Mammary epithelial cell (primary cell): ENCODE measurements at regions of chr11 and their contacts with region 1.

Region 1: GRCh38 chr11:2420502-2421225 is 20.1 kb downstream of the TSSC4 start:
- DNase-seq: peak; percentile 40
- H3K4me3 ChIP-seq: peak overlapping the region in 1 of 3 experiments; percentile 3
- H3K27ac ChIP-seq: no peak overlapping the region
- H3K4me1 ChIP-seq: peaks cover 3% of the 10 kb centered on the region
- H3K27me3 ChIP-seq: no peaks in the 10 kb centered on the region
- CTCF ChIP-seq: peak; percentile 78 to 93

Region 2: DNA sequence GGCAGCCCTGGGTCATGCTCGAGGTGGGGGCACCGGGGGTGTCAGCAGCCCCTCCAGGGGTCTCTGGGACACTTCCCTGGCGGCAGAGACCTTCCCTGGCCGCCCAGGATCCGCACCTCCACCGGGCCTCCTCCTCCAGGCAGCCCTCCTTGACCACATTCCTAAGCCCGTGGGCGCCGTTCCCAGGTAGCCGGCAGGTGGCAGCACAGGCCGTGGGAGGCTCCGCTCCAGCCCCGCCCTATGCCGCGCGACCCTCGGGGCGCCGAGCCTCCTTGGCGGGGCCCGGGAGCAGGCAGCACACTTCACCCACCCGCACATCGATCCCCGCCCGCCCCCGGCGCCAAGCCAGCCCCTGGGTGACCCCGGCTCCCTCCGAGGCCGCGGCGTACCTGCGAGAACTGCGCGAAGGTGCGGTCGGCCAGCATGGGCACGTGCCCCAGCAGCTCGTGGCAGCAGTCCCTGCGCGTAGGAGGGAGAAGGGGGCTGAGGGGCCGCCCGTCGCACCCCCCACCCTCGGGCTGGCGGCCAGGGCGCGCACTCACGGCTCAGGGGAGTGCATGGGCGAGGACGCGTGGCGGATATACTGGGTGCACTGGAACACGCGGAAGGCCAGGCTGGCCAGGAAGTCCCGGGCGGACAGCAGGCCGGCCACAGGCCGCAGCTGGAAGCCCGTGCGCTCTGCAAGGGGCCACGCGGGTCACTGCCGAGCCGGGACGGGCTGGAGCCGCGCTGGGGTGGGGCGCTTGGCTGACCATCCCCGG is 254.4 kb before region 1 on chr11:
- CTCF ChIA-PET with region 1: no interaction called
- dilution Hi-C with region 1: no loop called
- in situ Hi-C with region 1: no loop called
- intact Hi-C with region 1: loop called (anchors 1 kb)
- DNase-seq: peak; percentile 23
- H3K4me3 ChIP-seq: peak overlapping the region in 2 of 3 experiments; percentile 18 to 24
- H3K27ac ChIP-seq: no peak overlapping the region
- H3K4me1 ChIP-seq: peaks cover 3% of the 10 kb centered on the region
- H3K27me3 ChIP-seq: peaks cover 4% of the 10 kb centered on the region
- CTCF ChIP-seq: peak; percentile 28 to 67

Region 3: DNA sequence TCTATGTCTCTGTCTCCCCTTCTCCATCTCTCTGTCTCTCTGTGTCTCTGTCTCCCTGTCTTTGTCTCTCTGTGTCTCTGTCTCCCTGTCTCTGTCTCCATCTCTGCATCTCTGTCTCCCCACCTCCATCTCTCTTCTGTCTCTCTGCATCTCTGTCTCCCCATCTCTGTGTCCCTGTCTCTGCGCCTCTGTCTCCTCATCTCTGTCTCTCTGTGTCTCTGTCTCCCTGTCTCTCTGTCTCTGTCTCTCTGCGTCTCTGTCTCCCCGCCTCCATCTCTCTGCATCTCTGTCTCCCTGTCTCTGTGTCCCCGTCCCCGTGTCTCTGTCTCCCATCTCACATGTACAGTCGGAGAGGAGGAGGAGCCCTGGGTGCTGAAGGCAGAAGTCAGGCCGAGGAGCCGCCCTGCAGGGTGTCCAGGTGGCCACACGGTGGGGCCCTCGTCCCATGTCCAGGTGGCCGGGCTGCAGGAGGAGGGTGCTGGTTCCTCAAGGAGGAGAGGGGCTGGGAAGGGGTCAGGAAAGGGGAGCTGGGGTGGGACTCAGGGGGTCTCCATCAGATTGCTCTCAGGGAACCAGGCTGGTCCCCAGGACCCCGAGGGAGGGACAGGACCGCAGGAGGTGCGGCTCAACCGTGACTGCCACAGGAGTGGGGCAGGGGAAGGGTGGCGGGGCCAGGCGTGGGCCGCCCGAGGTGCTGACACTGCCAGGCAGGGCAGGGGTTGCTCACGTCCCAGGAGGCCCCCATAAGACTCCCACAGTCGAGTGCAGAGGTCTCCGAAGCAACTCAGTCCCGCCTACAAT is 223.5 kb before region 1 on chr11:
- CTCF ChIA-PET with region 1: no interaction called
- dilution Hi-C with region 1: no loop called
- in situ Hi-C with region 1: loop called (anchors 10 kb)
- intact Hi-C with region 1: loop called (anchors 1 kb)
- DNase-seq: peak; percentile 36
- H3K4me3 ChIP-seq: no peak overlapping the region
- H3K27ac ChIP-seq: no peak overlapping the region
- H3K4me1 ChIP-seq: peaks cover 3% of the 10 kb centered on the region
- H3K27me3 ChIP-seq: no peaks in the 10 kb centered on the region
- CTCF ChIP-seq: peak; percentile 92 to 98

Region 4: DNA sequence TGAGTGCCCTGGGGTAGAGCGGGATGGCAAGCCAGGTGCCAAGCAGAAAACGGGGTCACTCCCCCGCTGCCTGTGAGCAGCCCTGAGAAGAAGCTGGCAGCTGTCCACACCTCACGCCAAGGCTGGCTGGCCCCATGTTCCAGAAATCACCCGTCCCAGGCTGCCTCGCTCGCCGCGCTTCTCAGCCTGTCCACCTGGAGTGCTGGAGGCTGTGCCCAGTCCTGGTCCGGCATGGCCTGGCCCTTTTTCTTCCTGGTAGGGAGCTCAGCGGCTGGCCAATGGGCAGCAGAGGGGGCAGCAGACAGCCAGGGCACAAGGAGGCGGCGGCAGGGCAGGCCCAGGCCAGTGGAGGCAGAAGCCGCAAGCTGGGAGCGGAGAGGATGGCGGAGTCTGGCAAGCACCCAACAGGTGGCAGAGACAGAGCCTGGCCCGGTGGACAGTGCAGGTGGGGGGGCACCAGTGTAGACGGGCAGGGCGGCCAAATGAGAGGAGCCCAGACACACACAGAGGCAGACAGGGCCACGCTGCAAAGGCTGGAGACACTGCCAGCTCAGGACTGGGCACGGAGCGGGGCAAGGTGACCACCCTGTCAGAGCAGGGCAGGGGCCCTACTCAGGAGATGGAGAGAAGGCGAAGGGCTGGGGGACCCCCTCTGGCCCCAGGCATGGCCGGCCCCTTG is 211.8 kb before region 1 on chr11:
- CTCF ChIA-PET with region 1: no interaction called
- dilution Hi-C with region 1: loop called (anchors 10 kb)
- in situ Hi-C with region 1: loop called in 1 of 2 experiments (anchors 10 kb)
- intact Hi-C with region 1: no loop called
- DNase-seq: peak; percentile 48
- H3K4me3 ChIP-seq: no peak overlapping the region
- H3K27ac ChIP-seq: no peak overlapping the region
- H3K4me1 ChIP-seq: peaks cover 18% of the 10 kb centered on the region
- H3K27me3 ChIP-seq: peaks cover 2% of the 10 kb centered on the region
- CTCF ChIP-seq: peak in 1 of 2 donors; percentile 41

Region 5: DNA sequence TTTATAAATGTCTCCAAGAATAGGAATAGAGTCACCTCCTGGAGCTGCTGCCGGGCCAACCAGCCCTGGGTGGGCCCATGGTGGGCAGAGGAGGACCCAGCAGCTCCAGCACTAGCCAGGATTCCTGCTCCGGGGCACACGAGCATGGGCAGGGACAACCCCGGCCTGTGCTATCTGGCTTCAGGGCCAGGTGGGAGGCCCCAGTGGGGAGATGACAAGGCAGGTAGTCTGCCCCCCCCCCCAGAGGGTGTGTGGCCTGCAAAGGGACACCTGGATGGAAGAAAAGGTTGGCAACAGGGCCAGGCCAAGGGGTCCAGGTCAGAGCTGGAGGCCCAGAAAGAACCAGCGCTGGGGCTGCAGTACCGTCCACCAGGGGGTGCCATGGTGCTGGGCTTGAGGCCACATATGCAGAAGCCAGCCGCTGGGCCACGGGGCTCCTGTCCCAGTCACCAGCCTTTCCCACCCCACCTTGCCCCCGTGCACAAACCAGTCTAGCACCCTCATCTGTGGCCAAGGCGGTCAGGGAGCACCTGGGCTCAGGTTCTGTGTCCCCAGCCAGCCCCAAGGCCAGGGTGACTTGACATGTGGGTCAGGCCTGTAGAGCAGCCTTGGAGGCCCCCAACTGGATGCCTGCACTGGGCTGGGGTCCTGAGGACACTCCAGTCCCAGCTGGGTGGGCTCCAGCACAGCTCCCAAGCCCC is 115.4 kb before region 1 on chr11:
- CTCF ChIA-PET with region 1: interaction called, 31 read pairs
- dilution Hi-C with region 1: no loop called
- in situ Hi-C with region 1: loop called (anchors 5 to 25 kb)
- intact Hi-C with region 1: loop called (anchors 1 kb)
- DNase-seq: peak; percentile 36
- H3K4me3 ChIP-seq: no peak overlapping the region
- H3K27ac ChIP-seq: no peak overlapping the region
- H3K4me1 ChIP-seq: no peaks in the 10 kb centered on the region
- H3K27me3 ChIP-seq: no peaks in the 10 kb centered on the region
- CTCF ChIP-seq: peak; percentile 66 to 91

Region 6: DNA sequence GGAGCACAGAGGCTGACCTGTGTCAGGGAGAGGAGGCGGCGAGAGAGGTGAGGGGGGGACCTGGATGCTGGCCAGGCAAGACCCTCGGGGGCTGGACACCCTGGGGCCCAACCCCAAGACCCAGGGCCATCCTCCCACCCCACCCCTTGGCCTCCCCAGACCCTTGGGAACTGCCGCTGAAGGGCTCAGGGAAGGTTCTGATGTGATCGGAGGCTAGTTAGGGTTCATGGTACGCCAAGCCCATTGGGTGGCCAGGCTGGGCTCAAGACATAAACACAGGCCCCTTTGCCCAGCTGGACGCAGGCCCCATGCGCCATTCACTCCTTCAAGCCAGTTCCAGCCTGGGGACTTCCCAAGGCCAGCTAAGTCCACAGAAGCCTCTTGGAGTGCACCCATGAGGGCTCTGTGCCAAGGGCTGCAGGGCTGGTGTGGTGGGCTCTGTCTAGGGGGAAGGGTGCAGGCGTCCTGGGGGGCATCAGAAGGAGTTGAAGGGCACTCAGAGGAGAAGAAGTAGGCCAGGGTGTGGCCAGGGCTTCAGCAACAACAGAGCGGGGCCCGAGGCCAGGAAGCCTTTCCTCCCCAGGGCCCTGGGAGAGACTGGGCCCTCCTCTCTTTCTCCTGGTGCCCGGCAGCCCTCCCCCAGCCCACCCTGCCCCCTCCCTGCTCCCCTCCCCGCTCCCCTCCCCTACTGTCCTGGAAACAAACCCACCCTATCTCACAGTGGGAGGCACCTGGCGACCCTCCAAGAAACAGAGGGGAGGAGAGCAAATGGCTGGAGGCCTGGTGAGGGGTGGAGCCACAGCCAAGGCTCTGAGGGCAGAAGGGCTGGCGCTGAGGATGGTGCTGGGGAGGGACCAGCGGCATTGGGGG is 105.9 kb before region 1 on chr11:
- CTCF ChIA-PET with region 1: no interaction called
- dilution Hi-C with region 1: no loop called
- in situ Hi-C with region 1: loop called (anchors 5 to 25 kb)
- intact Hi-C with region 1: no loop called
- DNase-seq: no peak
- H3K4me3 ChIP-seq: no peak overlapping the region
- H3K27ac ChIP-seq: no peak overlapping the region
- H3K4me1 ChIP-seq: peaks cover 10% of the 10 kb centered on the region
- H3K27me3 ChIP-seq: no peaks in the 10 kb centered on the region
- CTCF ChIP-seq: no peak

Region 7: GRCh38 chr11:3000082-3000961 is 579.7 kb after region 1 on chr11:
- CTCF ChIA-PET with region 1: no interaction called
- dilution Hi-C with region 1: no loop called
- in situ Hi-C with region 1: no loop called
- intact Hi-C with region 1: no loop called
- DNase-seq: peak; percentile 96
- H3K4me3 ChIP-seq: no peak overlapping the region
- H3K27ac ChIP-seq: peak overlapping the region; percentile 63
- H3K4me1 ChIP-seq: peaks cover 63% of the 10 kb centered on the region
- H3K27me3 ChIP-seq: no peaks in the 10 kb centered on the region
- CTCF ChIP-seq: no peak